ENCODE measurements at regions of chr20 and their contacts with region 1.

Region 1: GRCh38 chr20:53883098-53883811 is 187.1 kb downstream of the BCAS1 start:
- DNase-seq: no peak
- ATAC-seq: no peak
- H3K4me3 ChIP-seq: no peak overlapping the region
- H3K27ac ChIP-seq: peak overlapping the region; percentile 79
- H3K4me1 ChIP-seq: peaks cover 13% of the 10 kb centered on the region; the same call in 1 of the 2 replicates
- H3K27me3 ChIP-seq: no peaks in the 10 kb centered on the region
- CTCF ChIP-seq: no peak

Region 2: DNA sequence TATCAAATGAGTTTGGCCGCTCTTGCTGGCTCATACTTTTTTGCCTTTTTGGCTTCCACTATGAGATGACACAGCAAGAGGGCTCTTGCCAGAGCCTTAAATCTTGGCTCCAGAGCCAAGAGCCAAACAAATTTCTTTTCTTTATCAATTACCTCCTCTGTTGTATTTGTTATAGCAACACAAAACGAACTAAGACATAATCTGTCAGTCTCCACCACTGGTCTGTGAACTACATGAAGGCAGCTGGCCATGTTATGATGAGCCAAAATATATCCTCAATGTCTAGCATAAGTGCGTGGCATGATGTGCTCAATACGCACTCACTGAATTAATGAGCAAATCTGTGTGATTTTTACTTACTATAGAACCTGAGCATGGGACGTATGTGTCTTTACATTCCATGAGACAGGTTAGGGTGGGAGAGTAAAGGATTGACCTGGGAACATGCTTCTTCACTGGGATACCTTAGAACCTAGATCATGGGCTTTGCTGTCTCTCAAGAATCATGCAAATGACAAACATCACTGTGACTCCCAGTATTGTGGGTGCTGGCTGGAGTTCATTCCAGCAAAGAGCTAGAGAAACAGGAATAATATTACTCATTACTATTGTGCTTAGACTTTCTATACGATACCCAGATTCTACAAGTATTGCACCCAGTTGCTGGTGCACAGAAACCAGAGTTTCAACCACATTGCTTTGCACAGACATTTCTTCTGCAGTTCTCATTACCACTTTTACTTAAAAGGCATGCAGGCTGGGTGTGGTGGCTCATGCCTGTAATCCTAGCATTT is 69.4 kb before region 1 on chr20:
- CTCF ChIA-PET with region 1: no interaction called
- POLR2A ChIA-PET with region 1: no interaction called
- in situ Hi-C with region 1: no loop called
- intact Hi-C with region 1: no loop called
- DNase-seq: no peak
- ATAC-seq: 0 out of 2 replicates have a peak, but pooled peaks have one; percentile 25
- H3K4me3 ChIP-seq: no peak overlapping the region
- H3K27ac ChIP-seq: peak overlapping the region; percentile 86
- H3K4me1 ChIP-seq: peaks cover 11% of the 10 kb centered on the region; the same call in 1 of the 2 replicates
- H3K27me3 ChIP-seq: no peaks in the 10 kb centered on the region
- CTCF ChIP-seq: no peak

Region 3: GRCh38 chr20:53857723-53858236 is 25.5 kb before region 1 on chr20:
- CTCF ChIA-PET with region 1: no interaction called
- POLR2A ChIA-PET with region 1: interaction called, 10 read pairs
- in situ Hi-C with region 1: no loop called
- intact Hi-C with region 1: no loop called
- DNase-seq: no peak
- ATAC-seq: peak; percentile 75
- H3K4me3 ChIP-seq: no peak overlapping the region
- H3K27ac ChIP-seq: peak overlapping the region; percentile 96
- H3K4me1 ChIP-seq: peaks cover 22% of the 10 kb centered on the region
- H3K27me3 ChIP-seq: no peaks in the 10 kb centered on the region
- CTCF ChIP-seq: no peak

Region 4: GRCh38 chr20:53917145-53918019 is 34.1 kb after region 1 on chr20:
- CTCF ChIA-PET with region 1: no interaction called
- POLR2A ChIA-PET with region 1: no interaction called
- in situ Hi-C with region 1: no loop called
- intact Hi-C with region 1: no loop called
- DNase-seq: no peak
- ATAC-seq: no peak
- H3K4me3 ChIP-seq: no peak overlapping the region
- H3K27ac ChIP-seq: peak overlapping the region; percentile 100
- H3K4me1 ChIP-seq: peaks cover 52% of the 10 kb centered on the region
- H3K27me3 ChIP-seq: no peaks in the 10 kb centered on the region
- CTCF ChIP-seq: no peak

Region 5: DNA sequence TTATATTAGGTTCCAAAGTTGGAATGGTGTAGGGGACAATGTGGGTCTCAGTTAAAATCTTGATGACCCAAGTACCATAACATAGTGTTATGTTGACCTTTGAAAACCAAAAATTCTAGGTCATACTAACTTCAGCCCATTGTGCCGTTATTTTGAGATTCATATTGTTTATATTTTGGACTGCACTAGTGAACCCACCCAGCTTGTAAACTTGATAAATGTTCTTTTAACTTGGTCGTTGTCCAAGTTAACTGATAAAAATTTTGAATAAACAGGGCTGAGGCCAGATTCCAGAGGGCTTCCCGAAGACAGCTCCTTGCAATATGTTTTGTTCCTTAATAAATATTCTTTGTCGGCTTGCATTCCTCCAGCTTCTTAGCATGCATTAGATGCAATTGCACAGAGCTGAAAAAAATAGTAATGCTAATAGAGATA is 96.8 kb after region 1 on chr20:
- CTCF ChIA-PET with region 1: no interaction called
- POLR2A ChIA-PET with region 1: no interaction called
- in situ Hi-C with region 1: no loop called
- intact Hi-C with region 1: no loop called
- DNase-seq: no peak
- ATAC-seq: no peak
- H3K4me3 ChIP-seq: no peak overlapping the region
- H3K27ac ChIP-seq: no peak overlapping the region
- H3K4me1 ChIP-seq: no peaks in the 10 kb centered on the region
- H3K27me3 ChIP-seq: no peaks in the 10 kb centered on the region
- CTCF ChIP-seq: no peak